WTC11 (cell line): ENCODE measurements at regions of chrX and their contacts with region 1.

Region 1: DNA sequence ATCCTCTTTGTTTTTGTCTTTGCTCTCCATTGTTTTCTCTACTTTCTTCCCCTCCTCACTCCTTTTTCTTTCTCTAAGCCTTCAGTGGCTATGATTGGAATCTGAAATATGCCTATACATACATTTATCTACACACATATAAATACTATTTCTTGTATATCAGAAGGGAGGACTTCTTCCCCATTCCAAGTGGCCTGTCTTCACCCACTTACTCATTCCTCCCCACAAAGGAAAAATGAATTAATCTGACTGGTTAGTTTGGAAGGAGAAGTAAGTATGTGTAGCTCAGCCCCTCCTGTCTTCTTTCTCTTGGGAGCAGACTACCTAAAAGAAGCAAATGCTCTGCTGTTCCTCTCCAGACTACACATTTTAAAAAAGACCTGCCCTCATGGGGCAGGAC is 17.7 kb downstream of the GUCY2F start:
- DNase-seq: no peak
- ATAC-seq: no peak
- H3K4me3 Mint-ChIP-seq: no peak overlapping the region
- H3K27ac Mint-ChIP-seq: no peak overlapping the region
- H3K4me1 Mint-ChIP-seq: no peaks in the 10 kb centered on the region
- H3K27me3 Mint-ChIP-seq: no peaks in the 10 kb centered on the region
- CTCF ChIP-seq: no peak

Region 2: GRCh38 chrX:109475174-109475891 is 11.1 kb after region 1 on chrX:
- CTCF ChIA-PET with region 1: interaction called, 12 read pairs
- POLR2A ChIA-PET with region 1: no interaction called
- DNase-seq: peak; percentile 57
- ATAC-seq: peak; percentile 75
- H3K4me3 Mint-ChIP-seq: no peak overlapping the region
- H3K27ac Mint-ChIP-seq: no peak overlapping the region
- H3K4me1 Mint-ChIP-seq: peaks cover 19% of the 10 kb centered on the region
- H3K27me3 Mint-ChIP-seq: no peaks in the 10 kb centered on the region
- CTCF ChIP-seq: no peak